GM10248 (cell line): ENCODE measurements at regions of chr1 and their contacts with region 1.

Region 1: GRCh38 chr1:8671306-8671917 is 146.0 kb downstream of the RERE start:
- DNase-seq: peak; percentile 37
- CTCF ChIP-seq: peak; percentile 61

Region 2: GRCh38 chr1:8554956-8555534 is 116.4 kb before region 1 on chr1:
- CTCF ChIA-PET with region 1: interaction called, 13 read pairs
- POLR2A ChIA-PET with region 1: no interaction called
- DNase-seq: no peak
- CTCF ChIP-seq: no peak

Region 3: GRCh38 chr1:8560611-8561544 is 110.5 kb before region 1 on chr1:
- CTCF ChIA-PET with region 1: interaction called, 65 read pairs
- POLR2A ChIA-PET with region 1: no interaction called
- DNase-seq: peak; percentile 37
- CTCF ChIP-seq: peak; percentile 86

Region 4: DNA sequence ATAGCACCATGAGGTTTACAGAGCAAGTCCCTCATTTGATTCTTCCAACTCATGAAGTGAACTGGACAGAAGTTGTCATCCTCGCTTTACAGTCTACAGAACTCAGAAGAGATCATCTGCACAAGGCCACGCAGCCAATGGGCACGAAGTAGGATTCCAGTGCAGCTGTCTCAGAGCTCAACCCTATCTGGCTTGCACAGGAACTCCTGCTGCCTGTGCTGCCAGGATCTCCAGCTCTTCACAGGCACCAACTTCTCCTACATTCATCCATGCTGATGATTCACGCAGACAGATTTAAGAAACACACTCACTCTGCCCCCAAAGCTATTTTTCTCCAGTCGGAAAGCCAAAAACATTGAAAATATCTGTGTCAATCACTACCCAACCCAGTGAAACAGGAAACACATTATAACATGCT is 11.0 kb before region 1 on chr1:
- CTCF ChIA-PET with region 1: interaction called, 49 read pairs
- POLR2A ChIA-PET with region 1: no interaction called
- DNase-seq: no peak
- CTCF ChIP-seq: no peak

Region 5: DNA sequence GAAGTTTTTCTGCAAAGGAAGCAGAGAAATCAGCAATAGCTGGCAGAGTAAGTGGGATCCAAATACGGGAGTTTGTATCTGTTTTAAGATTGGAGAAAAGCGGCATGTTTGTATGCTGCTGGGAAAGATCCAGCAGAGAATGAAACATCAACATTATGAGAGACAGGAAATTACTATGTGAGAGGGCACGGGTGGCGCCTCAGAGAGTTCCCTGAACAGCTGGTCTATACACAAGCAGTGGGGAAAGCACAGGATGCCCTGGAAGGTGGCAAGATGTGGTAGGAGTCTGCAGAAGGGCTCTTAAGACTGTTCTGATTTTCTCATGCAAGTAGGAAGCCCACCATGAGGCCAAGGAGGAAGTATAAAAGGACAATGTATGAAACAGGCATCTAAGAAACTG is 15.6 kb after region 1 on chr1:
- CTCF ChIA-PET with region 1: interaction called, 23 read pairs
- POLR2A ChIA-PET with region 1: interaction called, 4 read pairs
- DNase-seq: no peak
- CTCF ChIP-seq: no peak

Region 6: GRCh38 chr1:8702850-8703810 is 31.7 kb after region 1 on chr1:
- CTCF ChIA-PET with region 1: interaction called, 11 read pairs
- POLR2A ChIA-PET with region 1: no interaction called
- DNase-seq: peak; percentile 88
- CTCF ChIP-seq: peak; percentile 39

Region 7: DNA sequence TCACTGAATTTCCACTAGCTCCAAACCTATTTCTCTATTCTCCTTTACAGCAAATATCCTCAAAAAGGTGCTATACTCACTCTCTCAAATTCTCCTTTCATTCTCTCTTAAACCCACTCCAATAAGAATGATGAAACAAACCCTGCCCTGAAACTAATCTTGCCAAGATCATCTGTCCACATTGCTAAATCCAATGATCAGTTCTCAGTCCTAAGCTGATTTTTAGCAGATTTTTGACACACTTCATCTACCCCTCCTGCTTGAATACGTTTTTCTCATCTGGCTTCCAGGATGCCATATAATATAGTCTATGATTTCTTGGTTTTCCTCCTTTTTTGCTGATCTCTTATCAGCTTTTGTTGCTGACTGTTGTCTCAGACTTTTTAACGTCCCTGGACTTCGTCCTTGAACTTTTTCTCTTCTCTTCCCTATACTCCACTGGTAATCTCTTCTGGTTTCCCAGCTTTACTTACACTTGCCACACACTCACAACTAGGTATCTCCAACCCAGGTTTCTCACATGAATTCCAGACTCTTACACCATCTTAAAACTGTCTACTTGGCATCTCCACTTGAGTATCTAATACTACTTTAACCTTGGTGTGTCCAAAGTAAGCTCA is 110.7 kb after region 1 on chr1:
- CTCF ChIA-PET with region 1: no interaction called
- POLR2A ChIA-PET with region 1: no interaction called
- DNase-seq: no peak
- CTCF ChIP-seq: no peak

Region 8: DNA sequence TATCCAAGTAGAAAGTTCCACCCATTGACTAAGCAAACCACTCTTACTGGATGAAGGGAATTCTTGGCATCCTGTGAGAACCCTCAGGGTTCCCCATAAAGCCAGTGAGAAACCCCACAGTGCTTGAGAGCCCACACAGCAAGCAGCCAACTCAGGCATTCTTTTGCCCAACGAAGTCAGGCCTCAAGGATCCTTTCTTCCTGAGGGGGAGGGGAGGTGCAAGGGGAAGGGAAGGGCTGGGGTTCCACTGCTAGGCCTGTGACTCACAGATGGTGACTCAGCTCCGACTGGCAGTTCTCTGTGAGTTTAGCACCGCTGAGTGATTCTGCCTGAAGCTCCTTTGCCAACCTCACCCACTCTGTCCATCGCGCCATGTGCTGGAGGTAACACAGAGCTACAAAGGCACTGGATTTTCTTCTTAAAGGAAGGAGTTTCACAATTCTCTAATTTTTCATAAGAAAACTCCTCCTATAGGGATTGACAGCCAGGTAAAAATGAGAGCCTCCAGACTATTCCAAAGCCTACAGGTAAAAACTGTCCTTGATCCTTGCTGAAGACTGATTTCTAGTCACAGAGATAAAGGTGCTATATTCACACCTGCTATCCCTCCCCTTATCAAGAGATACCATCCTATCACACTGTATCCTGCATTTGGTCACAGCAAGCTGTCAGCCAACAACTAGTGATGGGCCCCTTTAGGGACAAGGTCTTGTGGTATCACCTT is 202.3 kb after region 1 on chr1:
- CTCF ChIA-PET with region 1: no interaction called
- POLR2A ChIA-PET with region 1: no interaction called
- DNase-seq: no peak
- CTCF ChIP-seq: no peak